AG04449 (cell line): ENCODE measurements at regions of chr2 and their contacts with region 1.

Region 1: DNA sequence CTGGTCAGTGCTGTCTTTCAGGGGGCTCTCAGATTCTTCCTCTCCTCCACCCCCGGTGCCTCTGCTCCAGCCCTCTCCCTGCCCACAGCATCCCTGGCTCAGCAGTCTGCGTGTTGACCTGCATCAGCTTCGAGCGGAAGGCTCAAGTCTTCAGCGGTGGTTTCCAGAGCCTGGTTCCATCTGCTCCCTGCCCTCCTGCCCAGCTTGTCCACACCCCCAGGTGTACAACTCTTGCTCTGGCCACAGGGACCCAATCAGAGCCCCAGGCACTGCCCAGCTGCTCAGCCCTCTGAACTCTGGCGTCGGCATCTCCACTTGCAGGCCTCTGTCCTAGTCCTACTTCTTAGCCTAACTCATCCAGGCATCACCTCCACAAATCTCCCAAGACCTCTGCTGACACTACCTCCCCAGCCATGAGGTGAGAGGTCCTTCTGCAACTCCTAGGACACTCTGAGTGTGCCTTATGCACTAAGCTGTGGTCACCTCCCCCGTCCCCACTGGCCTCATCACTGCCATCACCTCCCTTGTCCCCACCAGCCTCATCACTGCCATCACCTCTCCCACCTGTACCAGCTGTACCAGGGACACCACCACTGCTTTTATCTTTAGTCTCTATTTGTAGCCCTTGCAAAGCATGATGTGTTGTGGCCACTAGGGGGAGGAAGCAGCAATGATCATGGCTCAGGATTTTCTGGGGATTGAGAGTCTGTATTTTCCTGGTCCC is 60.9 kb downstream of the EDAR start:
- DNase-seq: no peak
- H3K4me3 ChIP-seq: no peak overlapping the region
- CTCF ChIP-seq: peak; percentile 85

Region 2: DNA sequence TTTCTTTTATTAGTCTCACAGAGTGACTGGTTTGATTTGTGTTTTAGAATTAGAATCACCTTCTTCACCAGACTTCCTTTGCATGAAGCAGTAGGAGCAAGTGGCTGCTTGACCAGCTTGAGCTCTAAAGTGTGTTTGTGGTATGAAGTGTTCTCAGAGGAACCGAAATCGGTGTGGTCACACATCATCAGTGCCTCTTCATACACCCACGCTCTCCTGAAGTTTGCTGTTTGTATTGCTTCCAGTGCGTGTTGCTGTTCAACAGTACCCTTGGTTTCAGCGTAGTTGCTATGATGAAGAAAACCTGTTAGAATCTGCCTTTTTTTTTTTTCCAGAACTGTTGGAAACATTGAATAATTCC is 316.0 kb before region 1 on chr2:
- CTCF ChIA-PET with region 1: no interaction called
- POLR2A ChIA-PET with region 1: no interaction called
- DNase-seq: no peak
- H3K4me3 ChIP-seq: no peak overlapping the region
- CTCF ChIP-seq: no peak

Region 3: DNA sequence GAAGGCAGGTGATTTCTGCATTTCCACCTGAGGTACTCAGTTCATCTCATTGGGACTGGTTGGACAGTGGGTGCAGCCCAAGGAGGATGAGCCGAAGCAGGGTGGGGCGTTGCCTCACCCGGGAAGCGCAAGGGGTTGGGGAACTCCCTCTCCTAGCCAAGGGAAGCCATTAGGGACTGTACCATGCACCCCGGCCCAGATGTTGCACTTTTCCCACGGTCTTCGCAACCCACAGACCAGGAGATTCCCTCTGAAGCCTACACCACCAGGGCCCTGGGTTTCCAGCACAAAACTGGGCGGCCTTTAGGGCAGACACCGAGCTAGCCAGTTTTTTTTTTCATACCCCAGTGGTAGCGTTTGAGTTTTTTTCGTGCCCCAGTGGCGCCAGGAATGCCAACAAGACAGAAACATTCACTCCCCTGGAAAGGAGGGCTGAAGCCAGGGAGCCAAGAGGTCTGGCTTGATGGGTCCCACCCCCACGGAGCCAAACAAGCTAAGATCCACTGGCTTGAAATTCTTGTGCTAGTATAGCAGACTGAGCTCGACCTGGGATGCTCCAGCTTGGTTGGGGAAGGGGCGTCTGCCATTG is 284.7 kb before region 1 on chr2:
- CTCF ChIA-PET with region 1: no interaction called
- POLR2A ChIA-PET with region 1: no interaction called
- DNase-seq: no peak
- H3K4me3 ChIP-seq: no peak overlapping the region
- CTCF ChIP-seq: no peak

Region 4: GRCh38 chr2:108916796-108917421 is 11.2 kb before region 1 on chr2:
- CTCF ChIA-PET with region 1: interaction called, 21 read pairs
- POLR2A ChIA-PET with region 1: no interaction called
- DNase-seq: no peak
- H3K4me3 ChIP-seq: no peak overlapping the region
- CTCF ChIP-seq: no peak

Region 5: GRCh38 chr2:108940156-108940555 is 12.1 kb after region 1 on chr2:
- CTCF ChIA-PET with region 1: interaction called, 10 read pairs
- POLR2A ChIA-PET with region 1: no interaction called
- DNase-seq: no peak
- H3K4me3 ChIP-seq: no peak overlapping the region
- CTCF ChIP-seq: no peak